Endothelial cell of umbilical vein (primary cell): ENCODE measurements at regions of chr19 and their contacts with region 1.

Region 1: DNA sequence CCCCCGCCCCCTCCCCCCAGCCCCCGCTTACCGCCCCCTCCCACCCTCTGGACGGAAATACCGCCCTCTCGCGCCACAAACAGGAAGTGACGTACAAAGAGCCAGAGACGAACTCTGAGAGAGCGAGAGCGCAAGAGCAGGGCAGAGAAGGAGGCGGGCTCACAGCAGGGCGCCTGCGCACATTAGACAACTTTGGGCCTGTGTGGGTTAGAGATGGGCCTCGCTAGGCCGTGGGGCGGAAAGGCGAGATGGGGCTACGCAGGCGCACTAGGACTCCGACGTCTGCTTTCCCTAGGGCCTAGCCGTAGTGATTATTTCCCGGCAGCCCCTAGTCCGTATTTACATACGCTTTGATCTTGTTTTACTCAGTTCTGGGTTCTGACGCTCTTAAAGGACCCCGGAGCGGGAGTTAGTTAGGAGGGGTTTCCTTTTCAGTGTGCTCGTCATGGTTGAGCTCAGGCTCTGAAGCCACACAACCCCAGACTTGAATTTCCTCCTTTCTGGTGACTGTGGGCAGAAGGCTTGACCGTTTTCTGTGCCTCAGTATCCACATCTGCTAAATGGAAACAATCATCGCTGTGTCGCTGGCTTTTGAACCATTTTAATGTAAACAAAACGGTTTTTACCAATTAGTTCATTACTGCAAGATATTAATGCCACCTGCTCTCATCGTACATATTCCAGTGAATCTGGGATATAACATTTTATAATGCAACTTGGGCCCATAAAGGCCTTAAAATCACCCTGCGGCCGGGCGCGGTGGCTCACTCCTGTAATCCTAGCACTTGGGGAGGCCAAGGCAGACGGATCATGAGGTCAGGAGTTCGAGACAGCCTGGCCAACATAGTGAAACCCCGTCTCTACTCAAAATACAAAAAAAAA is 449 bp upstream of the AKT2 start:
- DNase-seq: peak; percentile 100
- H3K4me3 ChIP-seq: peak overlapping the region in 2 of 3 experiments; percentile 40 to 86
- H3K27ac ChIP-seq: peak overlapping the region; percentile 76
- H3K4me1 ChIP-seq: peaks cover 11% of the 10 kb centered on the region
- H3K27me3 ChIP-seq: no peaks in the 10 kb centered on the region
- CTCF ChIP-seq: no peak
- POLR2A ChIP-seq: peak; percentile 43

Region 2: DNA sequence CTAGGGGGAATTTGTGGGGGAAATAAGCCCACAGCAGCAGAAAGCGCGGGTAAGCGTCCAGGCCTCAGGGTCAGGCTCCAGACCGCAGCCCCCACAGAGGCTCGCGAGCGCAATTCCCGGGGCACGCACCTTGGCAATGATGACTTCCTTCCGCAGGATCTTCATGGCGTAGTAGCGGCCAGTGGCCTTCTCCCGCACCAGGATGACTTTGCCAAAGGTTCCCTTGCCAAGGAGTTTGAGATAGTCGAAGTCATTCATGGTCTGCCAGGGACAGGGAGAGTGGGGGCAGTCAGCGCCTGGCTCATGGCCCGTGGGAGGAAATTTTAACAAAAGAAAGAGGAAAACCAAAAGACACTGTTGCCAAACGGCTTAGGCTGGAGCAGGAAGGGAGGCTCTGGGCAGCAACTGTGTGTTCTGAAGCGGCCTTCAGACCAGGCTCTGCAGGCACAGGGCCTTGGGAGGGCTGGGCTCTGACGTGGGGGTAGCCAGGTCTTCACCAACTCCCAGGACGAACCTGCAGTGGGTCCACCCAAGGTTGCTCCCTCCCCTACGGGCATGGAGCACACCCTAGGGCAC is 43.7 kb before region 1 on chr19:
- CTCF ChIA-PET with region 1: no interaction called
- POLR2A ChIA-PET with region 1: no interaction called
- dilution Hi-C with region 1: no loop called
- intact Hi-C with region 1: loop called (anchors 2 kb)
- DNase-seq: peak; percentile 91
- H3K4me3 ChIP-seq: no peak overlapping the region
- H3K27ac ChIP-seq: peak overlapping the region; percentile 60
- H3K4me1 ChIP-seq: peaks cover 16% of the 10 kb centered on the region
- H3K27me3 ChIP-seq: no peaks in the 10 kb centered on the region
- CTCF ChIP-seq: no peak
- POLR2A ChIP-seq: no peak

Region 3: DNA sequence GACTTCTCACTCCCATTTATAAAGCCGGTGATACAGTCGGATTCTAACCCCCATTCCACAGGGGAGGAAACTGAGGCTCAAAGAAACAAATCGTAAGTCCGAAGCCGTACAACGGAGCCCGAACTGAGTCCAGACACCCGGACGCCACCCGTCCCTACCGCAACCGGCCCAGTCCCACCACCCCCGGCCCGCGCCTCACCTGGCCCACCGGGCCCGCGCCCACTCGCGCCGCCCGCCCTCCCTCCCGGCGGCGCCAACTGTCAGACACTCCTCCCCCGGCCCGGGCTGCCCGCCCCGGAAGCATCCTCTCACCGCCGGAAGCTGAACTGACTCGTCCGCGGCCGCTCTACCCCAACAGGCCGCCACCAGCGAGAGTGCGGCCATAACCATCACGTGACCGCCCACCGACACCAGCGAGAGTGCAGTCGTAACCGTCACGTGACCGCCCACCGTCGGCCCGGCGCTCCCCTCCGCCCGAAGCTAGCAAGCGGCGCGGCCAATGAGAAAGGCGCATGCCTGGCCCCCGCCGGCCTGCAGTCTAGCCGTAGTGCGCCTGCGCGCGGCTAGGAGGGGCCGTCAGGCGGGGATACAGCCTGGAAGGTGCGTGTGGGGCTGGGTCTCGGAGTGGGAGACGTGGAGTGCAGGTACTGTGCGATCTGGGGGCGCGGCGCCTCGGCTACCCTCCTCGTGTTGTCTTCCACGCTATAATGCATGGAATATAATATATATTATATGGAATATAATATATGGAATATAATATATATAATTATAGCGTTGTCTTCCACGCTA is 62.7 kb after region 1 on chr19 and contains the starts of genes C19orf47 and PLD3:
- CTCF ChIA-PET with region 1: no interaction called
- POLR2A ChIA-PET with region 1: no interaction called
- dilution Hi-C with region 1: no loop called
- intact Hi-C with region 1: loop called (anchors 1 kb)
- DNase-seq: peak; percentile 99
- H3K4me3 ChIP-seq: peak within 1 kb of the TSS; percentile 65 to 98 (median 95)
- H3K27ac ChIP-seq: peak within 1 kb of the TSS; percentile 83
- H3K4me1 ChIP-seq: peaks cover 13% of the 10 kb centered on the region
- H3K27me3 ChIP-seq: no peaks in the 10 kb centered on the region
- CTCF ChIP-seq: no peak
- POLR2A ChIP-seq: peak; percentile 98
- total RNA-seq, gene C19orf47: 16.4 and 17.3 TPM in 2 replicates
- total RNA-seq, gene PLD3: 166 and 172 TPM in 2 replicates

Region 4: DNA sequence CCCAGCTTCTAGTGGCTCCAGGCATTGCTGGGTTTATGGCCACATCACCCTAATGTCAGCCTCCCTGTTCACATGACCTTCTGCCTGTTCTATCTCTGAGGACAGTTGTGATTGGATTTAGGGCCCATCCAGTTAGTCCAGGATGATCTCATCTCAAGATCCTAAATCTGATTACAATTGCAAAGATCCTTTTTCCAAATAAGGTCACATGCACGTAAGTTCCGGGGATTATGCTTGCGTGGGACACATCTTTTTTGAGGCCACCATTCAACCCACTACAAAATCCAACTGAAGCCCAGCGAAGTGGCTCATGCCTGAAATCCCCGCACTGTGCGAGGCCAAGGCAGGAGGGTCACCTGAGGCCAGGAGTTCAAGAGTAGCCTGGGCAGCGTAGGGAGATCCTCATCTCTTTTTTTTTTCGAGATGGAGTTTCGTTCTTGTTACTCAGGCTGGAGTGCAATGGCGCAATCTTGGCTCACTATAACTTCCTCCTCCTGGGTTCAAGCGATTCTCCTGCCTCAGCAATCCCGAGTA is 75.2 kb after region 1 on chr19:
- CTCF ChIA-PET with region 1: no interaction called
- POLR2A ChIA-PET with region 1: no interaction called
- dilution Hi-C with region 1: no loop called
- intact Hi-C with region 1: no loop called
- DNase-seq: no peak
- H3K4me3 ChIP-seq: no peak overlapping the region
- H3K27ac ChIP-seq: no peak overlapping the region
- H3K4me1 ChIP-seq: peaks cover 8% of the 10 kb centered on the region
- H3K27me3 ChIP-seq: no peaks in the 10 kb centered on the region
- CTCF ChIP-seq: no peak
- POLR2A ChIP-seq: no peak

Region 5: DNA sequence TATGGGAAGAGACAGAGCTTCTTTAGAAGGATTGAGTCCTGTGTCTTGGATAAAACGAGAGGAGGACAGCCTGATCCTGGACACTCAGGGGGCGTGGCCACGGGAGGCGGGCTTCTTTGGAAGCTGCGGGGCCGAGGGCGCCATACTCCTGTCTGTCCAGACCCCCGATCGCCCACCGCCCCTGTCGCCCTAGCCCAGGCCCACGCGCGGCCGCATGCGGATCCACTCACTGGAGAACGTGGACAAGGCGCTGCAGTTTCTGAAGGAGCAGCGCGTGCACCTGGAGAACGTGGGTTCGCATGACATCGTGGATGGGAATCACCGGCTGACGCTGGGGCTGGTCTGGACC is 204.3 kb after region 1 on chr19:
- CTCF ChIA-PET with region 1: no interaction called
- POLR2A ChIA-PET with region 1: no interaction called
- dilution Hi-C with region 1: no loop called
- intact Hi-C with region 1: no loop called
- DNase-seq: no peak
- H3K4me3 ChIP-seq: no peak overlapping the region
- H3K27ac ChIP-seq: no peak overlapping the region
- H3K4me1 ChIP-seq: no peaks in the 10 kb centered on the region
- H3K27me3 ChIP-seq: peaks cover 0 to 3% of the 10 kb centered on the region in 2 experiments
- CTCF ChIP-seq: no peak
- POLR2A ChIP-seq: no peak